Gastrocnemius medialis (tissue), 4 donors: ENCODE measurements at regions of chr7 and their contacts with region 1.

Region 1: DNA sequence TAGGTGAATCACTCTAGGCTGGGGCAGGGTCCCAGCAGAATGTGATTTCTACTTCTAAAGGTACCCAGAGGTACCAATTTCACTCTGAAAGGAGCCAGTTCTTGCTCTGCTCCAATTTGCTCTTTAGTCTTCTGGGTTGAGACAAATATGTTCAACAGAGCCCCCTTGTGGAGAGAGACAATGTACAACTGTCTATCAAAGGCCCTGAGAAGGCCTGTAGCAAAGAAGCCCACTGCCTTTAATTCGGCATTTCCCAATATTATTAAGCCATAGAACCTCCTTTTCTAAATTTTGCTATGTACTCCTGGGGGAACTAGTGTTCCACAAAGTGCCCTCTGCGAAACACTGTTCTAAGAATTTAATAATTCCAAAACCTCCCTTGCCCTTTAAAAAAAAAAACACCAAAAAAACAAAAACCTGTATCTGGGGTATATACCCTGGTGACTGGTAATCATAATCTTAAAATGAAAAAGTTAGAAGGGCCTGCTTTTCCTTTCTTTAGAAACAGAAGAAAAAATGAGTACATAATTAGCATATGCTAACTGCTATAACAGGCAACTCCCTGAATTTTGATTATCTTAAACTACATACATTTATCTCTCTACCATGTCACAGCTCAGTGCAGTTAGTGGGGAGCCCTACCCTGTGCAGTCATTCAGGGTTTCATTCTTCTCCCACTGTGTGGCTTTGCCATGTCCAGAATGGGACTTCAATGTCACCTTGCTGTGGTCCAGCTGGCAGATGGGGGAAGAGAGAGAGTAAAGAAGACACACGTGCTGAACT is 160.9 kb upstream of the BMPER start:
- DNase-seq: no peak
- ATAC-seq: no peak
- H3K4me3 ChIP-seq: no peak overlapping the region
- H3K27ac ChIP-seq: peak overlapping the region in 2 of 4 donors; percentile 63 to 67
- H3K4me1 ChIP-seq: peaks cover 10 to 16% of the 10 kb centered on the region in 2 donors
- H3K27me3 ChIP-seq: no peaks in the 10 kb centered on the region
- CTCF ChIP-seq: peak in 3 of 5 experiments; percentile 27 to 47 (median 33)
- POLR2A ChIP-seq: no peak

Region 2: DNA sequence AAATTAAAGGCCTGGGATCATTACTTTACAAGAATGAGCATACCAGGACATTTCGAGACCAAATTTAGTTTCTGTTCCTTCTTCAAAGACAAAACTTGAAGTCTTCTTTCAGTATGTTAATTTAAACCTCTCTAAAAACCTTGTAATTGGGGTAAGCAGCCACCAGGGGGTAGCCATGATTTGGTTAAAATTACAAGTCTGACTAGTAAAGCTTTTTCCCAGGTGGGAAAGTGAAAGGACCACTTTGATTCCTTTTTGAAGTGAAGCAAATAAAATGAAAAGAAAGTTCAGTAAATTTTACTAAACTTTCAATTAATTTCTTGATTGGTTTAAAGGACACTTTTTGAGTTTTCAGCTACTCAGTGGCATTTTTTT is 320.9 kb before region 1 on chr7:
- in situ Hi-C with region 1: no loop called
- intact Hi-C with region 1: loop called (anchors 10 kb)
- DNase-seq: no peak
- ATAC-seq: no peak
- H3K4me3 ChIP-seq: no peak overlapping the region
- H3K27ac ChIP-seq: no peak overlapping the region
- H3K4me1 ChIP-seq: peaks cover 0 to 6% of the 10 kb centered on the region in 2 donors
- H3K27me3 ChIP-seq: no peaks in the 10 kb centered on the region
- CTCF ChIP-seq: peak in 4 of 5 experiments; percentile 7 to 51 (median 26)
- POLR2A ChIP-seq: no peak

Region 3: DNA sequence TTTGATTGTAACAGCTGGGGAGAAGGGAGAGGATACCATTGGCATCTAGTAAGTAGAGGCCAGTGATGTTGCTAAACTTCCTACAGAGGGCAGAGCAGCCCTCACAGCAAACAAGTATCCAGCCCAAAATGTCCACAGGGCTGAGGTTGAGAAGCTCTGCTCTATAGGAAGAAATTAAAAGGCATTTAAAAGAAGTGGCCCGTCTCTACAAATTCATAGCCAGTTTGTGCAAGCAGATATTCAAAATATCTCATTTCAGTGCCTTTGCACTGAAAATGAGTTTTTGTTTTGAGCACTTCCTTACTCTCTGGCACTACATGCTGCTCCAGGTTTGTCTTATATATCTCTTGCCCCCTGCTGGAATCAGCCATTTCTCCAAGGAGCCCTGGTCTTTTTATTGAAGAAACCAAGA is 285.1 kb before region 1 on chr7:
- in situ Hi-C with region 1: no loop called
- intact Hi-C with region 1: loop called (anchors 10 kb)
- DNase-seq: peak in 1 of 2 donors; percentile 11
- ATAC-seq: peak; percentile 58 to 75
- H3K4me3 ChIP-seq: no peak overlapping the region
- H3K27ac ChIP-seq: no peak overlapping the region
- H3K4me1 ChIP-seq: no peaks in the 10 kb centered on the region
- H3K27me3 ChIP-seq: no peaks in the 10 kb centered on the region
- CTCF ChIP-seq: peak in 3 of 5 experiments; percentile 37 to 57 (median 40)
- POLR2A ChIP-seq: no peak

Region 4: GRCh38 chr7:33645104-33645503 is 99.4 kb before region 1 on chr7:
- in situ Hi-C with region 1: no loop called
- intact Hi-C with region 1: no loop called
- DNase-seq: no peak
- ATAC-seq: no peak
- H3K4me3 ChIP-seq: no peak overlapping the region
- H3K27ac ChIP-seq: no peak overlapping the region
- H3K4me1 ChIP-seq: no peaks in the 10 kb centered on the region
- H3K27me3 ChIP-seq: no peaks in the 10 kb centered on the region
- CTCF ChIP-seq: no peak
- POLR2A ChIP-seq: no peak